Activated T-helper 1 cell treated with anti-CD3 and anti-CD28 coated beads, Interleukin-12 subunit alpha, Interleukin-12 subunit beta, Interleukin-2, Interleukin-4 antibody, amounts not matched to agents 30 ng/mL and 10 ng/mL and 1 ng/mL, durations not matched to agents 14 hours and 24 hours and 36 hours (primary cell): ENCODE measurements at regions of chr22 and their contacts with region 1.

Region 1: GRCh38 chr22:50185384-50186087 is at the start of gene TRABD:
- DNase-seq: peak; percentile 84
- H3K4me3 Mint-ChIP-seq: peak within 1 kb of the TSS; percentile 96
- H3K27ac Mint-ChIP-seq: peak within 1 kb of the TSS; percentile 94
- H3K4me1 Mint-ChIP-seq: peaks cover 14% of the 10 kb centered on the region
- H3K27me3 Mint-ChIP-seq: peaks cover 4% of the 10 kb centered on the region
- total RNA-seq, gene TRABD: 94.1 and 96.8 TPM in 2 replicates

Region 2: GRCh38 chr22:49936018-49936952 is 249.3 kb before region 1 on chr22:
- intact Hi-C with region 1: loop called (anchors 5 kb)
- DNase-seq: peak; percentile 91
- H3K4me3 Mint-ChIP-seq: peak overlapping the region; percentile 71
- H3K27ac Mint-ChIP-seq: peak overlapping the region; percentile 79
- H3K4me1 Mint-ChIP-seq: peaks cover 7% of the 10 kb centered on the region
- H3K27me3 Mint-ChIP-seq: no peaks in the 10 kb centered on the region

Region 3: GRCh38 chr22:50148991-50149721 is 36.4 kb before region 1 on chr22:
- intact Hi-C with region 1: loop called (anchors 1 kb)
- DNase-seq: peak; percentile 61
- H3K4me3 Mint-ChIP-seq: no peak overlapping the region
- H3K27ac Mint-ChIP-seq: no peak overlapping the region
- H3K4me1 Mint-ChIP-seq: peaks cover 8% of the 10 kb centered on the region
- H3K27me3 Mint-ChIP-seq: no peaks in the 10 kb centered on the region

Region 4: GRCh38 chr22:50200461-50201190 is 15.1 kb after region 1 on chr22 and contains the start of gene SELENOO:
- intact Hi-C with region 1: loop called (anchors 1 kb)
- DNase-seq: peak; percentile 90
- H3K4me3 Mint-ChIP-seq: peak within 1 kb of the TSS; percentile 88
- H3K27ac Mint-ChIP-seq: peak within 1 kb of the TSS; percentile 63
- H3K4me1 Mint-ChIP-seq: peaks cover 19% of the 10 kb centered on the region
- H3K27me3 Mint-ChIP-seq: no peaks in the 10 kb centered on the region
- total RNA-seq, gene SELENOO: 23.7 and 25.9 TPM in 2 replicates

Region 5: GRCh38 chr22:50341977-50342650 is 156.6 kb after region 1 on chr22:
- intact Hi-C with region 1: loop called (anchors 5 kb)
- DNase-seq: peak; percentile 80
- H3K4me3 Mint-ChIP-seq: peak overlapping the region; percentile 83
- H3K27ac Mint-ChIP-seq: peak overlapping the region; percentile 78
- H3K4me1 Mint-ChIP-seq: peaks cover 11% of the 10 kb centered on the region
- H3K27me3 Mint-ChIP-seq: peaks cover 2% of the 10 kb centered on the region